Activated T-helper 2 cell treated with anti-CD3 and anti-CD28 coated beads, Interferon-gamma antibody, Interleukin-2, Interleukin-4, amounts not matched to agents 10 μg/mL and 5 μg/mL and 100 μg/mL, durations not matched to agents 14 hours and 24 hours and 36 hours (primary cell): ENCODE measurements at regions of chr2 and their contacts with region 1.

Region 1: DNA sequence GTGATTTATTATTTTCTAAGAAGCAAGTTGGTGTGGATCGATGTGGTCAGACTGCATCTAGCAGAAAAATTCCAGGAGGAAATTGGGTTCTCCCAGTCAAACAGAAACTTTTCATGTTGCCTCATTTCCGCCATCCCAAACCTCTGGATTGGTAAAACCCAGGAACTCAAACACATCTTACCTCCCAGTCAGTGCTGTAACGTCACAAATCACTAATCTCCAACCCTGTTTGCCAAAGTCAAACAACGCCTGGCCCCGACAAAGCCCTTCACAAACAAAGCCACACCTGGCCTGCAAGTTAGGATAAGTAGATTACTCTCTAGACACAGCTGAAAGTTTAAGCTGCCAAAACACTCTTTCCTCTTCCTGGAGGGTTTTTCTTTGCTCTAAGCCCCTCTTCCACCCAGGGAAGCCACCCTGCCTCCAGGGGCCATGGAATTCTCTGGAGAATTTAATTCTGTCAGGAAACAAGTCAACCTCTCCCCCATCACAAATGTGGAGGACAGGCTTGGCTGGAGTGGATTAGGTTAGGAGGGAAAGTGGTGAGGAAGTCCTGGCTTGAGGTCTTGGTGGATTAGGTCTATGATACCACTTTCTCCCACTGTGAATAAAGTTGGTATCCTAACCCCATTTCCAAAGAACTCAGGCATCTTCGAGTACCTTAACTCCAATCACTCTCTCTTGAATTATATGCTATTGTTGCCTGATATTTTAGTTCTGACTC is 86.7 kb downstream of the LYPD6B start:
- DNase-seq: no peak
- H3K4me3 Mint-ChIP-seq: no peak overlapping the region
- H3K27ac Mint-ChIP-seq: no peak overlapping the region
- H3K4me1 Mint-ChIP-seq: no peaks in the 10 kb centered on the region
- H3K27me3 Mint-ChIP-seq: peaks cover 15% of the 10 kb centered on the region

Region 2: GRCh38 chr2:149136111-149136510 is 10.9 kb after region 1 on chr2:
- intact Hi-C with region 1: loop called (anchors 1 kb)
- DNase-seq: no peak
- H3K4me3 Mint-ChIP-seq: no peak overlapping the region
- H3K27ac Mint-ChIP-seq: no peak overlapping the region
- H3K4me1 Mint-ChIP-seq: no peaks in the 10 kb centered on the region
- H3K27me3 Mint-ChIP-seq: peaks cover 6% of the 10 kb centered on the region